Ovary (tissue), 10 donors: ENCODE measurements at regions of chr17 and their contacts with region 1.

Region 1: GRCh38 chr17:27353461-27354050 is 59.6 kb downstream of the WSB1 start:
- DNase-seq: peak; percentile 91 to 95 (median 94)
- H3K4me3 ChIP-seq: peak overlapping the region; percentile 59
- H3K27ac ChIP-seq: peak overlapping the region; percentile 80 to 94
- H3K4me1 ChIP-seq: no peaks in the 10 kb centered on the region
- H3K27me3 ChIP-seq: no peaks in the 10 kb centered on the region
- CTCF ChIP-seq: peak; percentile 88 to 99 (median 99)
- EP300 ChIP-seq: peak; percentile 7
- POLR2A ChIP-seq: peak; percentile 94

Region 2: GRCh38 chr17:27236717-27237315 is 116.7 kb before region 1 on chr17:
- intact Hi-C with region 1: loop called in 1 of 4 experiments (anchors 5 kb)
- DNase-seq: peak; percentile 58 to 89 (median 72)
- H3K4me3 ChIP-seq: no peak overlapping the region
- H3K27ac ChIP-seq: no peak overlapping the region
- H3K4me1 ChIP-seq: no peaks in the 10 kb centered on the region
- H3K27me3 ChIP-seq: no peaks in the 10 kb centered on the region
- CTCF ChIP-seq: peak; percentile 52 to 94 (median 91)
- EP300 ChIP-seq: no peak
- POLR2A ChIP-seq: no peak